ENCODE measurements at regions of chr9 and their contacts with region 1.

Region 1: GRCh38 chr9:107489687-107490605 is at the start of gene KLF4:
- DNase-seq: peak; percentile 79 to 95
- ATAC-seq: peak; percentile 81
- H3K4me3 ChIP-seq: peak within 1 kb of the TSS; percentile 53
- H3K27ac ChIP-seq: peak within 1 kb of the TSS; percentile 90 to 91
- H3K4me1 ChIP-seq: peaks cover 25% of the 10 kb centered on the region
- CTCF ChIP-seq: no peak
- EP300 ChIP-seq: peak in 1 of 2 experiments; percentile 67; a peak in 1 of 5 replicates
- POLR2A ChIP-seq: peak; percentile 59
- RAD21 ChIP-seq: peak; percentile 9 to 56; a peak in 3 of 5 replicates
- polyA plus RNA-seq, gene KLF4: 8.3 and 10.1 TPM in 2 replicates

Region 2: DNA sequence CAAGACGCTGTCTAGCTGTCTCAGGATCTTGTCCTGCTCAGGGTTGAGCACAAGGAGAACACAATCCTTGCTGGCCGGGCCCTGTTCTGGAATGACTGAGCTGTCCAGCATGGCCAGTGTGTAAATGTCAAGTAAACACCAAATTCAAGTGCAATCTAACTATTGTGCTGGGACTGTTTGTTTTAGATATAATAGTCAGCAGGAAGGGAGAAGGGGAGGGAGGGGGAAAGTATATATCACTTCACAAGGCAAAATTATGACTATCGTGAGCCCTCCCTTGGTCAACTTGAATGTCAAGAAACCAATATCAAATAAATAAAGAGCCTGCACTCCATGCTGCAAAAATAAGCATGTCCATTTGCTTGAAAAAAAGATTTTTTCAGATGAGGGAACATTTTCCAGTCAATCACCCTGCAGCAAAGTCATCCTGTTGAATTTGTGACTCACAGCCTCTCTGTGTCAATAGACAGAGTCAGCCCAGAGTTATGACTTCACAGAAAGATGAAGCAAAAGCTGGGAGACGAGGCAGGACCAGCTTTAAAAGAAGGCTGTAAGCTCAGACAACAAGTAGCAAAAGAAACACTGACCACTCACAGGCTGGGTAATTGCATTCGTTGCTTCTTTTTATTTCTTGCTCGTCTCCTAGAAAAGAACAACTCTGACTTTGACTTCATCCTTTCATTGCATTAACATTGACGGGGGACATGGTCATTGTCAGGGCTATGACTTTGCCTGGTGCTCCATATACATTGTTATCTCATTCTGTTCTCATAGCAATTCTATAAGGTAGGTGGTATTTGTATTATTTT is 14.8 kb after region 1 on chr9:
- CTCF ChIA-PET with region 1: interaction called, 6 read pairs
- POLR2A ChIA-PET with region 1: interaction called, 20 read pairs
- DNase-seq: peak; percentile 95 to 96
- ATAC-seq: peak; percentile 98 to 99
- H3K4me3 ChIP-seq: no peak overlapping the region
- H3K27ac ChIP-seq: peak overlapping the region; percentile 89 to 91
- H3K4me1 ChIP-seq: peaks cover 23% of the 10 kb centered on the region
- CTCF ChIP-seq: no peak
- EP300 ChIP-seq: peak; percentile 72 to 76; a peak in 3 of 5 replicates
- POLR2A ChIP-seq: no peak
- RAD21 ChIP-seq: peak in 1 of 2 experiments; percentile 60; a peak in 3 of 5 replicates

Region 3: GRCh38 chr9:107749787-107750444 is 260.0 kb after region 1 on chr9:
- CTCF ChIA-PET with region 1: interaction called, 3 read pairs
- POLR2A ChIA-PET with region 1: interaction called, 14 read pairs
- DNase-seq: peak; percentile 56 to 80
- ATAC-seq: peak; percentile 75 to 78
- H3K4me3 ChIP-seq: no peak overlapping the region
- H3K27ac ChIP-seq: peak overlapping the region; percentile 85 to 89
- H3K4me1 ChIP-seq: peaks cover 41% of the 10 kb centered on the region
- CTCF ChIP-seq: no peak
- EP300 ChIP-seq: no peak
- POLR2A ChIP-seq: no peak
- RAD21 ChIP-seq: no peak

Measured in A549 (cell line).